ENCODE measurements at regions of chr3 and their contacts with region 1.

Region 1: GRCh38 chr3:65412588-65412987 is 626.1 kb downstream of the MAGI1 start:
- DNase-seq: peak; percentile 40 to 87
- ATAC-seq: peak; percentile 79 to 95 (median 89)
- H3K4me3 ChIP-seq: no peak overlapping the region
- H3K27ac ChIP-seq: peak overlapping the region in 4 of 10 donors; percentile 67 to 80 (median 70)
- H3K4me1 ChIP-seq: peaks cover 14 to 61% (median 48%) of the 10 kb centered on the region in 9 donors
- H3K27me3 ChIP-seq: no peaks in the 10 kb centered on the region
- CTCF ChIP-seq: peak in 7 of 9 donors; percentile 27 to 70 (median 42)

Region 2: DNA sequence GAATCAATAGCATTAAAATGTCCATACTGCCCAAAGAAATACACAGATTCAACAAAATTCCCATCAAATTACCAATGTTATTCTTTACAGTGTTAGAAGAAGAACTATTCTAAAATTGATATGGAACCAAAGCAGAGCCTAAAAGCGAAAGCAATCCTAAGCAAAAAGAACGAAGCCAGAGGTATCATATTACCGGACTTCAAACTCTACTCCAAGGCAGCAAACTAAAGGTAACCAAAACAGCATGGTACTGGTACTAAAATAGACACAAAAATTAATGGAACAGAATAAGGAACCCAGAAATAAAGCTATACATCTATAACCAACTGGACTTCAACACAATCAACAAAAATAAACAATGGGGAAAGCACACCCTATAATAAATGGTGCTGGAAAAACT is 892.3 kb before region 1 on chr3:
- intact Hi-C with region 1: loop called in 1 of 10 experiments (anchors 10 kb)
- DNase-seq: no peak
- ATAC-seq: no peak
- H3K4me3 ChIP-seq: no peak overlapping the region
- H3K27ac ChIP-seq: no peak overlapping the region
- H3K4me1 ChIP-seq: no peaks in the 10 kb centered on the region
- H3K27me3 ChIP-seq: no peaks in the 10 kb centered on the region
- CTCF ChIP-seq: no peak

Region 3: DNA sequence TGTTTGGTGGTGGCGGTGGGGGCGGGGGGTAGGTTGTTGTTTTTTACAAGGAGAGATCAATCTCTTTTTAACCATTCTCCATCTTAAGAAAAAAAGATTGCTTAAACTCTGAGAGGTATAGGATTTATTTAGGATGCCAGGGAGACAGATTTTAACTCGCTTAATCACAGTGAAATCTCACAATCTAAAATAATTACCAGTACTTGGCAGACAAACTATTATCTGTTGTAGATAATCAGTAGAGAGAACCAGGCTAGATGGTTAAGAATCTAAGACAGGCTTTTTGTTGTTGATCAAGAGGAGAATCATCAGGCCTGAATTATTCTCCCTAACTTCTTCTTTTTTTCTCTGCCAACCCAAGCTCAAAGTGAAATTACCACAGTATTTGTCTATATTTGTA is 254.6 kb before region 1 on chr3:
- intact Hi-C with region 1: no loop called
- DNase-seq: no peak
- ATAC-seq: no peak
- H3K4me3 ChIP-seq: no peak overlapping the region
- H3K27ac ChIP-seq: no peak overlapping the region
- H3K4me1 ChIP-seq: no peaks in the 10 kb centered on the region
- H3K27me3 ChIP-seq: no peaks in the 10 kb centered on the region
- CTCF ChIP-seq: no peak

Region 4: DNA sequence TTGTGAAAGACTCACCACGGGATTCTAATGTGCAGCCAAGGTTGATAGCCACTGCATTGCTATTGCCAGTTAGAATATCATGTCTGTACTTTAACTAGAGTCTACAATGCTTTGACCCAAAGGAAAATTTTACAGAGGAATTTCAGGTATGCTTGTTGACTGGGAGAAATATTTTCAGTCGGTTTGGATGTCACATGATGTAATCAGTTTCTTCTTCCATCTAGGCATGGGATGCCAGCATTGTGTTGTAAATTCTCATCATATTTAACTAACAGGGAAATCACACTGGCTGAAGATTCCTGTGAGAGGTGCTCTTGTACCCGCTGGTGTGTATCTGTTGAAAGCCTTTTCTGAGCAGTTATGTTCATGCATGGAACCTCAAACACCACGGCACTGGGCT is 215.9 kb before region 1 on chr3:
- intact Hi-C with region 1: no loop called
- DNase-seq: no peak
- ATAC-seq: no peak
- H3K4me3 ChIP-seq: no peak overlapping the region
- H3K27ac ChIP-seq: no peak overlapping the region
- H3K4me1 ChIP-seq: no peaks in the 10 kb centered on the region
- H3K27me3 ChIP-seq: no peaks in the 10 kb centered on the region
- CTCF ChIP-seq: no peak

Region 5: GRCh38 chr3:65334045-65334665 is 78.4 kb before region 1 on chr3:
- intact Hi-C with region 1: loop called in 2 of 10 experiments (anchors 5 kb)
- DNase-seq: peak in 1 of 2 donors; percentile 70
- ATAC-seq: peak; percentile 48 to 87 (median 78)
- H3K4me3 ChIP-seq: no peak overlapping the region
- H3K27ac ChIP-seq: peak overlapping the region in 2 of 10 donors; percentile 8 to 29
- H3K4me1 ChIP-seq: peaks cover 3 to 41% (median 17%) of the 10 kb centered on the region in 9 donors
- H3K27me3 ChIP-seq: no peaks in the 10 kb centered on the region
- CTCF ChIP-seq: peak in 5 of 9 donors; percentile 30 to 57 (median 39)

Region 6: GRCh38 chr3:65342084-65342683 is 70.4 kb before region 1 on chr3:
- intact Hi-C with region 1: loop called in 2 of 10 experiments (anchors 5 to 10 kb)
- DNase-seq: peak; percentile 16 to 52
- ATAC-seq: peak in 3 of 8 donors; percentile 45 to 59 (median 50)
- H3K4me3 ChIP-seq: no peak overlapping the region
- H3K27ac ChIP-seq: no peak overlapping the region
- H3K4me1 ChIP-seq: peaks cover 0 to 36% (median 4%) of the 10 kb centered on the region in 9 donors
- H3K27me3 ChIP-seq: no peaks in the 10 kb centered on the region
- CTCF ChIP-seq: peak in 7 of 9 donors; percentile 50 to 65 (median 60)

Region 7: GRCh38 chr3:65466300-65466988 is 53.9 kb after region 1 on chr3:
- intact Hi-C with region 1: loop called in 1 of 10 experiments (anchors 1 kb)
- DNase-seq: no peak
- ATAC-seq: no peak
- H3K4me3 ChIP-seq: no peak overlapping the region
- H3K27ac ChIP-seq: no peak overlapping the region
- H3K4me1 ChIP-seq: no peaks in the 10 kb centered on the region
- H3K27me3 ChIP-seq: no peaks in the 10 kb centered on the region
- CTCF ChIP-seq: no peak